ENCODE measurements at regions of chr6 and their contacts with region 1.

Region 1: DNA sequence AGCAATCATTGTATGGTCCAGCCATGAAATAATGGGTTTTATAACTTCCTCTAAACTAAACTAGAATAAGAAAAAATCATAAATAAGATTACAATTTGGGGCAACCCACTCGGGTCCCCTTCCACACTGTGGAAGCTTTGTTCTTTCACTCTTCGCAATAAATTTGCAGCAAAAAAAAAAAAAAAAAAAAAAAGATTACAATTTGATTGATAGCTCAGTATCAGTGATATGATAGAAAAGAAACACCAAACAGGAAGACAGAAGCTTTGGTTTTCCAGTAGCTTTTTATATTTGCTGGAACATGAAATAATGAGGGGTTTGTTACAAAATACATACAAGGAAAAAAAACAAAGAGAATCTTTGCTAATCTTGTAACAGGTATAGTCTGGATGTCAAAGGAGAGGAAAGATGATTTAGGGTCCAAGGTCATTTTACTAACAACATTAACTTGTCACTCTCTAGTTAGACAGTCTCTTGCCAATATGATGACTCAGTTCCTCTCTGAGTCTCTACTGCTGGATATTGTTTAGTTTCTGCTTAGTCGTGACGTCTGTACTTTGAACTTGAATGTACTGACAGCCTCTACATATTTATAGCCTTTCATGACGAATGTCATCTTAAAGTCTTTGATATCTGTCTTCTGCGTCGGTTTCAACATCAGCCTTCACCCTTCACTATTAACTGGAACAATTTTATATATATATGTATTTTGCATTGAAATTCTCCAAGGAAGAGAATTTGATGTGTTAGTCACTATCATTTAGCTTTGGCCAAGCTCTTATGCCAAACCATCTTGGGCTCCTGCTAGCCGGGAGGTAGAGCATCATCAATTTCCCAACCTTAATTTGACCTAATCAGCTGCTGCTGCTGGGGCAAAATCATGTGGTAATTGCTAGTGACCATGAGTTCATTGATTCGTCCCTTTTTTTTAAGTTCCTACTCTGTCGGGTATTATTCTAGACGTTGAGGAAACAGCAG is 213.1 kb upstream of the STXBP5 start:
- DNase-seq: no peak
- ATAC-seq: no peak
- H3K4me3 Mint-ChIP-seq: no peak overlapping the region
- H3K27ac Mint-ChIP-seq: no peak overlapping the region
- H3K4me1 Mint-ChIP-seq: no peaks in the 10 kb centered on the region
- H3K27me3 Mint-ChIP-seq: no peaks in the 10 kb centered on the region
- CTCF ChIP-seq: no peak

Region 2: DNA sequence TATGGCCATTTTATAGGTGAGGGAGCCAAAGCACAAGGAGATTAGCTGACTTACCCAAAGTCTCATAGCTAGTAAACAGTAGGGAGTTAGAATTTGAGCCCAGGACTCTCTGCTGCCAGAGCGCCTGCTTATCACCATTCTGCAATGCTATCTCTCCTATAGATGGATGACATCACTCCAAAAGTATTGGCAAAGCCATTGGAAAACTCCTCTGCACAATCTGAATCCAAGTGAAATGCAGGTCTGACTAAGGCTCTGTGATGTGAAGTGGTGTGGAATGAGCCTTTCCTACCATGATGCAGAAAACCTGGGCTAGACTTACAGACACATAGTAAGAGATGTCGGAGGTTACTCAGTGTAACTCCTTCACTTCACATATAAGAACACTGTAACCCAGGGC is 855.9 kb before region 1 on chr6:
- CTCF ChIA-PET with region 1: no interaction called
- POLR2A ChIA-PET with region 1: interaction called, 10 read pairs
- DNase-seq: no peak
- ATAC-seq: no peak
- H3K4me3 Mint-ChIP-seq: no peak overlapping the region
- H3K27ac Mint-ChIP-seq: no peak overlapping the region
- H3K4me1 Mint-ChIP-seq: no peaks in the 10 kb centered on the region
- H3K27me3 Mint-ChIP-seq: no peaks in the 10 kb centered on the region
- CTCF ChIP-seq: no peak

Measured in WTC11 (cell line).